PC-9 (cell line): ENCODE measurements at regions of chr6 and their contacts with region 1.

Region 1: DNA sequence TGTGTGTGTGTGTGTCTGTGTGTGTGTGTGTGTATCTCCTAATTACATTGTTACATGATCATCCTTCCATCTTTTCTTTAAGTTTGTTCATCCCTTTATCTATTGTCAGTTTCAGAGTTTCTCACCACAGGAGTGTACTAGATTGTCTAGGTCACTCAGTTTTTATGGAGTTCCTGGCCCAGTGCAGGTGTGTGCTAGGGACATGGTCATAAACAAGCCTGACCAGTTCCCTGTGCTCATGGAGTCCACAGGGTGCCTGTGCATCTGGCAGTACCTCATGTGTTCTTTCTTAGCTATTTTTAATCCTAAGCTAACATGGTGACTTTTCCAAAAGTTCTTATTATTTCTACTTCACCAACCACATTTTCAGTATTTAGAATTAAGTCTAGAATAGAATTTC is 43.9 kb downstream of the PHACTR2 start:
- DNase-seq: no peak
- H3K4me3 ChIP-seq: no peak overlapping the region
- H3K27ac ChIP-seq: no peak overlapping the region
- H3K4me1 ChIP-seq: no peaks in the 10 kb centered on the region
- H3K27me3 ChIP-seq: no peaks in the 10 kb centered on the region
- CTCF ChIP-seq: no peak

Region 2: GRCh38 chr6:145656128-145656527 is 1934.5 kb after region 1 on chr6:
- CTCF ChIA-PET with region 1: interaction called, 12 read pairs
- POLR2A ChIA-PET with region 1: no interaction called
- intact Hi-C with region 1: no loop called
- DNase-seq: no peak
- H3K4me3 ChIP-seq: no peak overlapping the region
- H3K27ac ChIP-seq: no peak overlapping the region
- H3K4me1 ChIP-seq: no peaks in the 10 kb centered on the region
- H3K27me3 ChIP-seq: no peaks in the 10 kb centered on the region
- CTCF ChIP-seq: no peak